ENCODE measurements at regions of chr12 and their contacts with region 1.

Region 1: DNA sequence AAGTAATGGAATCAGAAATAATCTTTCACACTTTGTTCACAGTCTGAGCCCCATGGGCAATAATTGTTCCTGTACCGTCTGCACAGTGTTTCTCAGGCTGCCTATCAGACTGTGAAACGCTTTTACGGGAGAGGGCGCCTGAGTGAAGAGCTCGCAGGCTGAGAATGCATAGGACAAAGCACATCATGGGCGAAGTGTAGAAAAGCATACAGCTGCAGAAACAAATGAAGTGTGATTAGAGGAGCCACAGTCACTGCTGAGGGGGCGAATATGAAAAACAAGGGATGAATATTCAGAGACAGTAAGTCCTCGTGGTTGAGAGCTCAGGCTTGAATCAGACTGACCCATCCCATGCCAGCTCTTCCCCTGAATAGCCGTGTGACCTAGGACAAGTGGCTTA is 438.4 kb upstream of the DCN start:
- DNase-seq: no peak
- ATAC-seq: peak; percentile 79

Region 2: GRCh38 chr12:91781114-91781513 is 160.1 kb after region 1 on chr12:
- intact Hi-C with region 1: loop called (anchors 10 kb)
- DNase-seq: no peak
- ATAC-seq: no peak